Activated CD4-positive, alpha-beta memory T cell treated with anti-CD3 and anti-CD28 coated beads, Interleukin-2, amount 10 ng/mL, durations not matched to agents 7 days and 5 days (primary cell): ENCODE measurements at regions of chr11 and their contacts with region 1.

Region 1: DNA sequence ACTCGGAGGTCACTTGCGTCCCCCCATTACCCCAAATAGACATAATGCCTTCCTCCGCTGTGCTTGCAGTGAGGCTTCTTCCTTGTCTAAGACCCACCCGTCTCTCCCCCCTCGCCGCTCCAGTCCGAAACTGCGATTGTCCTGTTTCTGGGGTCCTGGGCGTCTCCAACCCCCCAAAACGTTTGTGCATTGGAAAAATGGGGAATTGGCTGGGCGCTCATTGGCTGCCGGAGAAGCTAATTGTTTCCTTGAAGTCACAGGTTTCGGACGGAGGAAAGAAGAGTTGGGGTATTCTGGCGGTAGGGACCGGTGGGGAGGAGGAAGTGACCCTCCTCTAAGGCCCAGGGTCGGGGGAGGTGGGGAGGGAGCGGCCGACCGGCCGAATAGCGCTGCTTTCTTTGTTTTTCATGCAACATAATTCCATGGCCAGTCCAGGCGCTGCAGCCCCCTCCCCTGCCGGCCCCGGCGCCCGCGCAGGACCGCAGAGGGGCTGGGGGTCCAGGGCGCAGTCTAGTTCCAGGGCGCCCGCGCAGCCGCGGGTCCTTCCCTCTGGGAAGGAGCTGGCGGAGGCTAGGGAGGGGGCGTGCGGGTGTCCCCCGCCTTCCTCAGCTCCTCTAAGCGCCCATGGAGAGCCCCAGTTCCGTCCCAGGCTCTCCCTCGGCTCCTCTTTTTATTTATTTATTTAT is 12.7 kb upstream of the CPT1A start:
- DNase-seq: no peak
- H3K4me3 Mint-ChIP-seq: no peak overlapping the region
- H3K27ac Mint-ChIP-seq: no peak overlapping the region
- H3K4me1 Mint-ChIP-seq: peaks cover 3% of the 10 kb centered on the region
- H3K27me3 Mint-ChIP-seq: peaks cover 47% of the 10 kb centered on the region

Region 2: DNA sequence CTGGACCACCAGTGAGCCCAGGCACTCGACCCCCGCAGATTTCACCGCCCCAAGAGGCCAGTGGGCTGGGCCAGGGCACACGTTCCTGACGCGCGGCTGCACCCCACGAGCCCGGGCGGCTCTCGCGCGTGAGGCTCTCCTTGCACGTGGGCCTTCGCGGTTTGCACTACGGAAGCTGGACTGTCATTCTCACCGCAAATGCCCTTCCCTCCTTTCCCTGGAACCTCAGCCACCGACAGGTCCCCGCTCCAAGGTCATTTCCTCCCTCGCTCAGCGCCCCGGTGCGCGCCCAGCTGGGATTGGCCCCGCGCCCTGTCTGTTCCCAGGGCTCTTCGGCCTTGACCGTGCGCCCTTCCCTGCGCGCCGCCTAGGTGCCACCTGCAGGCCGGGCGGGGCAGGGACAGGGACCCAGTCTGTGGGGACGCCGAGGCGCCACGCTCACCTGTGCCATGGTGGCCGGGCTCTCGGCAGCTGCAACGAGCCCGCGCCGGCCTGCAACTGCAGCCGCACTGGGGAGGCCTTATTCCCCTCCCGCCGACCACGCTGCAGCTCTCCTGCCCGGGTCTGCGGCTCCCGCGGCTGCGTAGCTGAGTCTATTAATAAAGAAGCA is 10.6 kb before region 1 on chr11:
- CTCF ChIA-PET with region 1: interaction called, 13 read pairs
- POLR2A ChIA-PET with region 1: interaction called, 8 read pairs
- DNase-seq: peak; percentile 76
- H3K4me3 Mint-ChIP-seq: peak overlapping the region; percentile 82
- H3K27ac Mint-ChIP-seq: peak overlapping the region; percentile 74
- H3K4me1 Mint-ChIP-seq: peaks cover 37% of the 10 kb centered on the region
- H3K27me3 Mint-ChIP-seq: peaks cover 6% of the 10 kb centered on the region

Region 3: DNA sequence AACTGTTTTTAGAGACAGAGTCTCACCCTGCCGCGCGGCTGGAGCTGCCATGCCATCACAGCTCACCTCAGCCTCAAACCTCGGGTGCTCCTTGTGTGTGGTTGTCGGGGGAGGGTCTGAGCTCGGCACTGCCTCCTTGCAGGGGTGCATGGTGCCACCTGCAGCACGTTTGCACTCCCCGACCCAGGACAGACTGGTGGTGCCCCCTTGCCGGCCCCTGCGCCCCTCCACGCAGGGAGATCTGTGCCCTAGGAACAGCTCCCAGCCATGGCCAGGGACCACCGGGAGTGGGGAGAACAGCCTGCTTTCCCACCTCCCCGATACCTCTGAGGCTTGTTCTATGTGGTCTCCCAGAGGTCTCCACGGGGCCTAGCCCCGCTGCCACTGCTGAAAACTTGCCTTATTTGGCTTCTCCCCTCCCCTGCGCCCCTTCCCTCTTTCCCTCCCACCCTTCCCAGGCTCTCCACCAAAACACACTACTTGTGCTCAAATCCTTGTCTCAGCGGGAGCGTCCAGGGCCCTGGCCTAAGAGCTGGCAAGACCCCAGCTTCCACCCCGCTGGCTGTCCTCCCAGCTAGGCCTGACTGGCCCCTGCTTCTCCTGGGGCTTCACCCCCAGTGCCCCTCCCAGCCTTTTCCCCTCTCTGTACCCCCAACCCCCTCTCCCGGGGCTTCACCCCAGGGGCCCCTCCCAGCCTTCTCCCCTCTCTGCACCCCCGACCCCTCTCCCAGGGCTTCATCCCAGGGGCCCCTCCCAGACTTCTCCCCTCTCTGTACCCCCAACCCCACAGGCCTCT is 180.9 kb after region 1 on chr11:
- CTCF ChIA-PET with region 1: no interaction called
- POLR2A ChIA-PET with region 1: no interaction called
- DNase-seq: no peak
- H3K4me3 Mint-ChIP-seq: no peak overlapping the region
- H3K27ac Mint-ChIP-seq: no peak overlapping the region
- H3K4me1 Mint-ChIP-seq: no peaks in the 10 kb centered on the region
- H3K27me3 Mint-ChIP-seq: peaks cover under 1% of the 10 kb centered on the region